ENCODE measurements at regions of chr2 and their contacts with region 1.

Region 1: DNA sequence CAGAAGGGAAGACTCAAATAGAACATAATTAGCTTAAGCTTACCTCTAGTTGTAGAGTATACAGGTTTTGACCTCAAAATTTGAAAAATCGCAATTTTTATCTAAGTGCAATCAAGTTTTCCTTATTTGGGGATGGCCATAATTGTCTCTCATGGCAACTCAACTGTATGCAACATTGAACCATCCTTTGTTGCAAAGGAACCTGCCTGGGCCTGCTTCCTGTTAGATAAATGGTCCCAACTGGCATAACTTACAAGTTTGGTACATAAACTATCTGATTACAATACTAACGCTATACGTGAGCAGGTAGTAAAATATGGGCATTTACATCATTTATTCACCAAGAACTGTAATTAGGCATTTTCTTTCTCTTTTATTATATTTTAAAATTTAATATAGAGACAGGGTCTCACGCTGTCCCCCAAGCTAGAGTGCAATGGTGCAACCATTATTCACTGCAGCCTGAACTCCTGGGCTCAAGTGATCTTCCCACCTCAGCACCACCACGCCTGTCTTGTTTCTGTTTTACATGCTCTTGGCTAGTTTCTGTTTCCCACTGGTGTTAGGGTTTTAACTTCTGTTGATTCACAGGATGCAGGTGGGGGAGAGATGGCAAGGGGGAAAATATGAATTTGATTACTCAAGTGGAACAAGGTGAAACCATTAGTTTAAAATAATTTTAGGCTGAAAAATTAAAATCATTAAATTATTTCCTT is 55.3 kb upstream of the B3GNT2 start:
- DNase-seq: no peak
- H3K4me3 ChIP-seq: no peak overlapping the region
- H3K27ac ChIP-seq: no peak overlapping the region
- H3K4me1 ChIP-seq: peaks cover 7% of the 10 kb centered on the region
- H3K27me3 ChIP-seq: no peaks in the 10 kb centered on the region
- CTCF ChIP-seq: no peak

Region 2: DNA sequence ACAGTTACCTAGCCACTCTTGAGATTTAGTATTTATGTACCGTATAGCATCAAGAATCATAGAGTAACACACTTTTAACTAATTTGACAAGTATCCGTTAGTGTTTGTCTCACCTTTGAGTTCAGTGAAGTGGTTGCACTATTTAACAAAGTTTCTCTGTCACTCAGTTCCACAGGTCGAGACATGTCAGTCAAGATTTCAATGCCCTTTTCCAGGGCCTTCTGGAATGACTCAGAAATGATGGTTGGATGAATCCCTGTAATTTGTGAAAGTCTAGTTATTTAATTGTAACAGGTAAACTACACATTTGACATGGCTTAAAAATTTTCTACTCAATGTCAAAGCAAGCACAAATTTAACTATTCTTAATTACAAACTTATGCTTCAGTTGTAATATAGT is 261.8 kb before region 1 on chr2:
- CTCF ChIA-PET with region 1: no interaction called
- dilution Hi-C with region 1: no loop called
- in situ Hi-C with region 1: no loop called
- intact Hi-C with region 1: no loop called
- DNase-seq: peak; percentile 75
- H3K4me3 ChIP-seq: no peak overlapping the region
- H3K27ac ChIP-seq: no peak overlapping the region
- H3K4me1 ChIP-seq: peaks cover 4% of the 10 kb centered on the region
- H3K27me3 ChIP-seq: no peaks in the 10 kb centered on the region
- CTCF ChIP-seq: no peak

Region 3: GRCh38 chr2:62186156-62186905 is 45.7 kb after region 1 on chr2:
- CTCF ChIA-PET with region 1: no interaction called
- dilution Hi-C with region 1: loop called (anchors 5 kb)
- in situ Hi-C with region 1: no loop called
- intact Hi-C with region 1: no loop called
- DNase-seq: no peak
- H3K4me3 ChIP-seq: no peak overlapping the region
- H3K27ac ChIP-seq: no peak overlapping the region
- H3K4me1 ChIP-seq: no peaks in the 10 kb centered on the region
- H3K27me3 ChIP-seq: no peaks in the 10 kb centered on the region
- CTCF ChIP-seq: no peak